Posterior cingulate gyrus (tissue), 11 donors: ENCODE measurements at regions of chr14 and their contacts with region 1.

Region 1: GRCh38 chr14:37638599-37638998 is 43.2 kb downstream of the TTC6 start:
- DNase-seq: no peak

Region 2: DNA sequence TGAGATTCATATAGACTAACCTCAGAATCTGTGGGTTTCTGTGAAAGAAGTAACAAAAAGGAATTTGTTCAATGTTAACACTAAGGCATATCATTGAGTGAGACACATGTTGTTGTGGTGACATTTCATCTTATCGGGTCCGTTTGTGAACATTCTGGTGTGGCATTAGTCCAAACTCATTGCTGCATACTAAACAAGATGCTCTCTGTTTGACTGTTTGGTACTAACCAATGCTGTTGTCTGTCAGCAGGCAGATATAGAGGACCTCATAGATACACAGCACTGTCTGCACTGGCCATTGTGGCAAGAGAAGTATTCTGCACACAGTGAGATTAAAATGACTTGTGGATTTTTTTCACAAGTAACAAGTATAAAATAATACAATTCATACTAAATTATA is 507.4 kb before region 1 on chr14:
- intact Hi-C with region 1: no loop called
- DNase-seq: peak in 1 of 10 donors; percentile 16

Region 3: DNA sequence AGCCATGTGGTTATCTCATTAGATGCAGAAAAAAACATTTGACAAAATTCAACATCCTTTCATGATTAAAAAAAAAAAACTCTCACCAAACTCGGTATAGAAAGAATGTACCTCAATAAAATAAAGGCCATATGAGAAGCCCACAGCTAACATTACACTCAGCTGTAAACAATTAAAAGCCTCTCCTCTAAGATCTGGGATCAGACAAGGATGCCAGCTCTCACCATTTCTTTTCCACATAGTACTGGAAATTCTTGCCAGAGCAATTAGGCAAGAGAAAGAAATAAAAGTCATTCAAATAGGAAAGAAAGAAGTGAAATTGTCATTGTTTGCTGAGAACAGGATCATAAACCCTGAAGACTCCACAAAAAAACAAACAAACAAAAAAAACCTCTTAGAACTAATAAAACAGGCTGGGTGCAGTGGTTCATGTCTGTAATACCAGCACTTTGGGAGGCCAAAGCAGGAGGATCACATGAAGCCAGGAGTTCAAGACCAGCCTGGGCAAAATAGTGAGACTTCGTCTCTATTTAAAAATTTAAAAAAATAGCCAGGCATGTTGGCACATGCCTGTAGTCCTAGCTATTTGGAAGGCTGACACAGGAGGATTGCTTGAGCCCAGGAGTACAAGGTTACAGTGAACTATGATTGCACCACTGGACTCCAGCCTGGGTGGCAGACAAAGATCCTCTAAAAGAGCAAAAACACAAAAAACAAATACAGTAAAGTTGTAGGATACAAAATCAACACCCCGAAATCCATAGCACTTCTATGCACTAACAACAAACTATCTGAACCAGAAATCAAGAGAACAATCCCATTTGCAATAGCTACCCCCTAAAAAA is 157.9 kb before region 1 on chr14:
- intact Hi-C with region 1: no loop called
- DNase-seq: no peak

Region 4: GRCh38 chr14:37569729-37570128 is 68.9 kb before region 1 on chr14:
- intact Hi-C with region 1: loop called (anchors 2 kb)
- DNase-seq: no peak